Caco-2 (cell line): ENCODE measurements at regions of chr12 and their contacts with region 1.

Region 1: GRCh38 chr12:28463396-28463795 is 273.1 kb downstream of the CCDC91 start:
- DNase-seq: no peak
- H3K4me3 ChIP-seq: no peak overlapping the region
- H3K4me3 Mint-ChIP-seq: no peak overlapping the region
- H3K27ac Mint-ChIP-seq: no peak overlapping the region
- H3K4me1 ChIP-seq: no peaks in the 10 kb centered on the region
- H3K4me1 Mint-ChIP-seq: peaks cover 7% of the 10 kb centered on the region
- H3K27me3 ChIP-seq: no peaks in the 10 kb centered on the region
- H3K27me3 Mint-ChIP-seq: no peaks in the 10 kb centered on the region
- CTCF ChIP-seq: no peak

Region 2: GRCh38 chr12:28497889-28498411 is 34.6 kb after region 1 on chr12:
- CTCF ChIA-PET with region 1: no interaction called
- POLR2A ChIA-PET with region 1: no interaction called
- intact Hi-C with region 1: no loop called
- DNase-seq: no peak
- H3K4me3 ChIP-seq: no peak overlapping the region
- H3K4me3 Mint-ChIP-seq: no peak overlapping the region
- H3K27ac Mint-ChIP-seq: no peak overlapping the region
- H3K4me1 ChIP-seq: peaks cover 25% of the 10 kb centered on the region
- H3K4me1 Mint-ChIP-seq: peaks cover 13% of the 10 kb centered on the region
- H3K27me3 ChIP-seq: no peaks in the 10 kb centered on the region
- H3K27me3 Mint-ChIP-seq: no peaks in the 10 kb centered on the region
- CTCF ChIP-seq: no peak

Region 3: DNA sequence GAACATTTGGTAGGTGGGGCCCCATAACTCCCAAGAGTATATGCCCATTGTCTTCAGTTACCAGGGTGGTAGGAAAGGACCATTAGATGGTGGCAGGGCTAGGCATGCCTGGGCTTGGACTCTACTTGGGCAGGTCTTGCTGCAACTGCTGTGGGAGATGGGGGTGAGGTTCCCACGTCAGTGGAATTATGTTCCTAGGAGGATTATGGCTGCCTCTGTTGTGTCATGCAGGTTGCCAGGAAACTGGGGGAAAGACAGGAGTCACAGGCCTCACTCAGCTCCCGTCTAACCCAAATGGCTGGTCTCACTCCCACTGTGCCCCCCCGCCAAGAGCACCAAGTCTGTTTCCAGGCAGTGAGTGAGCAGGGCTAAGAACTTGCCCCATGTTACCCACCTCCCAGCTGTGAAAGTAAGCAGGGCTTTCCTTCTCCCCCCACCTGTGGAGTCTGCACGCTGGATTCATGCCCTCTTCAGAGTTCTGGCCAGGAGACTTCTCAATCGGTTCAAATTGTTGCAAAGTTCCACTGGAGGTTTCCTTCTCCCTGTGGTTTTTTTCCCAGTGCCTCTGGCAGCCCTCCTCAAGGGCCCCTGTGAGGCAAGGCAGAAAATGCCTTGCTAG is 64.3 kb after region 1 on chr12:
- CTCF ChIA-PET with region 1: no interaction called
- POLR2A ChIA-PET with region 1: no interaction called
- intact Hi-C with region 1: no loop called
- DNase-seq: no peak
- H3K4me3 ChIP-seq: no peak overlapping the region
- H3K4me3 Mint-ChIP-seq: no peak overlapping the region
- H3K27ac Mint-ChIP-seq: no peak overlapping the region
- H3K4me1 ChIP-seq: no peaks in the 10 kb centered on the region
- H3K4me1 Mint-ChIP-seq: no peaks in the 10 kb centered on the region
- H3K27me3 ChIP-seq: no peaks in the 10 kb centered on the region
- H3K27me3 Mint-ChIP-seq: no peaks in the 10 kb centered on the region
- CTCF ChIP-seq: no peak

Region 4: GRCh38 chr12:28872654-28873268 is 409.4 kb after region 1 on chr12:
- CTCF ChIA-PET with region 1: no interaction called
- POLR2A ChIA-PET with region 1: no interaction called
- intact Hi-C with region 1: loop called (anchors 1 kb)
- DNase-seq: peak; percentile 71 to 78
- H3K4me3 ChIP-seq: no peak overlapping the region
- H3K4me3 Mint-ChIP-seq: no peak overlapping the region
- H3K27ac Mint-ChIP-seq: no peak overlapping the region
- H3K4me1 ChIP-seq: no peaks in the 10 kb centered on the region
- H3K4me1 Mint-ChIP-seq: no peaks in the 10 kb centered on the region
- H3K27me3 ChIP-seq: no peaks in the 10 kb centered on the region
- H3K27me3 Mint-ChIP-seq: peaks cover 12% of the 10 kb centered on the region
- CTCF ChIP-seq: peak; percentile 90 to 93